ENCODE measurements at regions of chr19 and their contacts with region 1.

Region 1: DNA sequence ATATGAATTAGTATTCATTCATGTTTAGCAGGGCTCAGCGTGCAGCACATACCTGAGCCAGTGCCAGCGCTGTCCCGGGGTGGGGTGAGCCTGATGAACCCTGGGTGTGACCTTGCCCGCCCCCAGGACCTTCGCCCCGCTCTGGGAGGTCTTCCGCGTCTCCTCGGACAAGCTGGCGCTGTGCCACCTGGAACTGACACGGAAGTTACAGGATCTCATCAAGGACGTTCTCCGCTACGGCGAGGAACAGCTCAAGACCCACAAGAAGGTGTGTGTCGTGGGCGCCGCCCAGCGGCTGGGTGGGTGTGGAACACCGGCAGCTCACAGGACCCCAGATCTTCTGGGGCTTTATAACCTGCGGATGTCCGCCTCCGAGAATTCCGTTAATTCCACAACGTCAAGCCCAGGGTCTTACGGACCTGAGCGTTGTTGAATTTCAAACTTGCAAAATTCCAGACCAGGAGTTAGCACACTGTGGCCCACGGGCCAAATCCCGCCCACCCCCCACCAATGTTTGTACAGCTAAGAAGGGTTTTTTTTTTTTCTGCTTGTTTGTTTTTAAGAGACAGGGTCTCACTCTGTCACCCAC is 15.4 kb downstream of the FCHO1 start:
- DNase-seq: peak; percentile 87
- ATAC-seq: peak; percentile 88

Region 2: DNA sequence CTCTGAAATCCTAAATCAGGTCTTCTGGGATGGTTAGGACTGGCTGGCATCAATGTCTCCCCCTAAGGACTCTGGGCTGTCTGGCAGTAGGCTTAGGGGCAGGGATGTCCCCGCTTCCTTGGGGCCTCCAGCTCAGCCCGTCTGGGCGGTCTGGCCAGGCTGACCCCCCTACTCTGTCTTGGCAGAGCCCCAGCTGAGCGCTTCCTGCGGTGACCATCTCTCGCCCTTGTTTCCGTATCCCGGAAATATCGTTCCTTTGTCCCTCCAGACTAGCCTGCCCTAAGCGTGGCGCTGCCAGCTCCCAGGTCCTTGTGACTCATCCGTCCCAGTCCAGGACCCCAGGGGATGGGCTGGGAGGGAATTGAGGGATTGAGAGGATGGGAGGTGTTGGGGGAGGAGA is 417.9 kb before region 1 on chr19:
- intact Hi-C with region 1: no loop called
- DNase-seq: peak; percentile 87
- ATAC-seq: peak; percentile 60 to 80

Region 3: DNA sequence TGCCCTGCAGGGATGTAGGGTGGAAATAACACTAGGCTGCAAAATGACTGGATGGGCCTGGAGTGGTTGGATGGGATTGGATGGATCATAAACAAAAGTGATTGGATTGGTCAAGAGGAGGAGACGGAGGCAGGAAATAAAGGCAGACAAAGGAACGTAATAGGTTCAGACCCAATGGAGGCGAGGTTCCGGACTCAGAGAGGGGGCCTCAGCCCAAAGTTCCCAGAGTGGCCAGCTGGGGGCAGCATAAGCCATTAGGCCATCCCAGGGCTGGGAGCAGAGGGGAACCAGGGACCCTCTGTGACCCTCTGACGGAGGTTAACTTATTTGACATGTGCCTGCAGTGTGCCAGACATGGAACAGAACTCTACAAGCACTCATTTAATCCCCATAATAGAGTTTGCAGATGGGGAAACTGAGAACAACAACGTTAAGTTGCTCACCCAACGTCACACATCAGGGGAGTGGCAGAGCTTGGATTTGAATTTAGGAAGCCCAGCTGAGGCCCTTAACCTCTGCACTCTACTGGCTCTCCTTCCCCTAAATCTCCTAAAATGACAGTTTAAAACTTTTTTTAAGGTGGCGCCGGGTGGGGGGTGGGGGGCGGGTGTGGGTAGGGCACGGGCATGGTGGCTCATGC is 62.7 kb before region 1 on chr19:
- intact Hi-C with region 1: loop called in 1 of 2 experiments (anchors 2 kb)
- DNase-seq: peak; percentile 51
- ATAC-seq: peak; percentile 74 to 81